Esophagus squamous epithelium (tissue), 5 donors: ENCODE measurements at regions of chr3 and their contacts with region 1.

Region 1: DNA sequence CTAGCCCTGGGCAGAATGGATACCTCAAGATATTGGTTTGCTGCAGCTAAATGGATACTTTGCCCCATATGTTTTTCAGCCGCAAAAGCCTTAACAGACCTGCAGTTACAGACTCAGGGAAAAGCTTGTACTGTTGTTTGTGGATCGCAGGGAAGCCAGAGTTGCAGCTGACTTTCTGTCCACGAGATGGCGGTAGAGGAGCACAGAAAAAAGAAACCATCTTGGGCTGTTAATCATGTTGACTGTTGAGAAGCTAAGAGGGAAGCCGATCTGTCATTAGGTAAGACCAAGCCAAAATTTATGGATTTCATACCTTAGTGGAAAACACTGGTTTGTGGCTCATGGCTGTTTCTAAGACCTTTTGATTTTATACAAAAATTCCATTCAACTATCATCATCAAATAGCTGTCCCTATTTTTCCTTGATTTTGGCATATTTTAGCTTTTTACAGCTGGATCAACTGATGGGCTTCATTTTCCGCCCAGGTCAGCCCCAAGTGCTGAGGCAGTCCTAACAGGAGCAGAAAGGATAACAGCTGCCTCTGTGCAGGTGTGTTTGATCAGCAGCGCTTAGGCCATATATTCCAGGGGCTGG is 205.7 kb upstream of the ZPLD1 start:
- DNase-seq: no peak
- H3K4me3 ChIP-seq: no peak overlapping the region
- H3K27ac ChIP-seq: no peak overlapping the region
- H3K4me1 ChIP-seq: peaks cover 0 to 5% (median 0%) of the 10 kb centered on the region in 3 donors
- H3K27me3 ChIP-seq: no peaks in the 10 kb centered on the region
- CTCF ChIP-seq: peak; percentile 84 to 93 (median 92)
- POLR2A ChIP-seq: no peak

Region 2: DNA sequence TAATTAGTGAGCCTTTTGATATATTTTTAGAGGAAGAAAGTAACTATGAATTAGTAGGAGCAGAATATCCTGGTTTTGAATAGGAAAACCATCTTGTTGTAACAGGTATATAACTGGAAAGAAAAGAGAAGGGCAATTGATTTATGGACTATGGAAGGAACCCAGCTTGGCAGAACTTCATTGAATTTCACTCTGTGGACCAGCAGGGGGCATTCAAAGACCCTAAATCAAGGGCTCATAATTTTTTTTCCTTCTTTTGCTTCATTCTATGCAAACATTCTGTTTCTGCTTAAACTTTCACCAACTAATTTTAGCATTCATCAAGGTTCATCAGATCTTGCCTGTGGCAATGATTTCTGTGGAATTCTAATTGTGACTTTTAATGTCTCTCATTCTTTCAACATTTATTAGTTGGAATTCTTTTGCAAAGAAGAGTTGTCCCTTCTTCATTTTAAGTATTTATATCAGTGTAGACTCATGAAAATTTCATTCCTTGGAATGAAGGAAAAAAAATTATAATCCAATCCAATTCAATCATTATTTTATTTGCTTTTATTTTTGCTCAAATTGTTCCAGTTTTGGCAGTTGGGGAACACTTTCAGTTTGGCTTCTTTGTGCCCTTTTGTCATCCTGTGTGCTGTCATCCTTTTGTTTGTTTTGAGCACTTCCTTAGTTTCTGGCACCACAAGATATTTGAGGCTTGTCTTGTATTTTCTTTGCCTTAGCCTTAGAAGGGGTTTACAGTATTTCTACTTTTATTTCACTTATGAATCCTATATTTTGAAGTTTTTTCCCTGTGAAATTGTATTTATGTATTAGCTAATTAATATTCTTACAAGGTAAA is 419.8 kb before region 1 on chr3:
- intact Hi-C with region 1: loop called (anchors 5 kb)
- DNase-seq: no peak
- H3K4me3 ChIP-seq: no peak overlapping the region
- H3K27ac ChIP-seq: peak overlapping the region in 1 of 4 donors; percentile 30
- H3K4me1 ChIP-seq: peaks cover 4 to 20% (median 9%) of the 10 kb centered on the region in 3 donors
- H3K27me3 ChIP-seq: no peaks in the 10 kb centered on the region
- CTCF ChIP-seq: peak; percentile 39 to 75 (median 52)
- POLR2A ChIP-seq: no peak

Region 3: GRCh38 chr3:101868534-101869464 is 360.4 kb before region 1 on chr3:
- intact Hi-C with region 1: no loop called
- DNase-seq: no peak
- H3K4me3 ChIP-seq: no peak overlapping the region
- H3K27ac ChIP-seq: peak overlapping the region; percentile 10 to 68 (median 47)
- H3K4me1 ChIP-seq: peaks cover 0 to 36% (median 16%) of the 10 kb centered on the region in 3 donors
- H3K27me3 ChIP-seq: no peaks in the 10 kb centered on the region
- CTCF ChIP-seq: no peak
- POLR2A ChIP-seq: no peak

Region 4: GRCh38 chr3:102536456-102536855 is 307.3 kb after region 1 on chr3:
- intact Hi-C with region 1: loop called (anchors 5 kb)
- DNase-seq: no peak
- H3K4me3 ChIP-seq: no peak overlapping the region
- H3K27ac ChIP-seq: no peak overlapping the region
- H3K4me1 ChIP-seq: no peaks in the 10 kb centered on the region
- H3K27me3 ChIP-seq: no peaks in the 10 kb centered on the region
- CTCF ChIP-seq: peak in 5 of 6 experiments; percentile 19 to 57 (median 28)
- POLR2A ChIP-seq: no peak